Gastrocnemius medialis (tissue), 4 donors: ENCODE measurements at regions of chr16 and their contacts with region 1.

Region 1: GRCh38 chr16:10918294-10919002 is 23.8 kb downstream of the DEXI start:
- DNase-seq: peak; percentile 89 to 96
- ATAC-seq: peak; percentile 39 to 51
- H3K4me3 ChIP-seq: no peak overlapping the region
- H3K27ac ChIP-seq: peak overlapping the region; percentile 92 to 94 (median 93)
- H3K4me1 ChIP-seq: peaks cover 40 to 45% of the 10 kb centered on the region in 2 donors
- H3K27me3 ChIP-seq: no peaks in the 10 kb centered on the region
- CTCF ChIP-seq: peak; percentile 87 to 97 (median 91)
- POLR2A ChIP-seq: no peak

Region 2: DNA sequence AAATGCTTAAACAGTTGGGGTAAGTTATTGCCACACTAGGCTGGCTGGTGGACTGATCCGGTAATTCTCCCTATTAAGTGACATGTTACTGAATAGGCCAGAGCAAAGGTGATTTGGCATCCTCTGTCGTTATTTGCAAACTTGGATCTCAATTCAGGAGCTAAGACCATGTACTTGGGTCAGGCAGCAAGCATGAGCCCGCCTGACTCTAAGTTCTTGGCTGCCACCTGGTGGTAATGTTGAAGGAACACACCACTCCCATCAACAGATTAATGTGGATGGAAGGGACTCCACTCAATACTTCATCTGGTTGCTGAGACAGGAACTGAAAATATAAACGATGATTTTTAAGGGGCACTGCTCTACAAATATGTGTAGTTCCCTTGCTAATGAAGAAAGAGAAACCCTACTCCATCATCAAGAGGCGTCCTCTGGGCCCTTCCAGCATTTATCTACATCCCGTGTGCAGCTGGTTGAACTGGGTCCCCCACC is 408.9 kb before region 1 on chr16:
- in situ Hi-C with region 1: loop called in 2 of 4 experiments (anchors 10 to 25 kb)
- intact Hi-C with region 1: loop called (anchors 2 kb)
- DNase-seq: peak; percentile 30 to 47
- ATAC-seq: peak; percentile 79 to 95
- H3K4me3 ChIP-seq: no peak overlapping the region
- H3K27ac ChIP-seq: no peak overlapping the region
- H3K4me1 ChIP-seq: peaks cover 9 to 11% of the 10 kb centered on the region in 2 donors
- H3K27me3 ChIP-seq: no peaks in the 10 kb centered on the region
- CTCF ChIP-seq: peak; percentile 63 to 81 (median 74)
- POLR2A ChIP-seq: no peak

Region 3: DNA sequence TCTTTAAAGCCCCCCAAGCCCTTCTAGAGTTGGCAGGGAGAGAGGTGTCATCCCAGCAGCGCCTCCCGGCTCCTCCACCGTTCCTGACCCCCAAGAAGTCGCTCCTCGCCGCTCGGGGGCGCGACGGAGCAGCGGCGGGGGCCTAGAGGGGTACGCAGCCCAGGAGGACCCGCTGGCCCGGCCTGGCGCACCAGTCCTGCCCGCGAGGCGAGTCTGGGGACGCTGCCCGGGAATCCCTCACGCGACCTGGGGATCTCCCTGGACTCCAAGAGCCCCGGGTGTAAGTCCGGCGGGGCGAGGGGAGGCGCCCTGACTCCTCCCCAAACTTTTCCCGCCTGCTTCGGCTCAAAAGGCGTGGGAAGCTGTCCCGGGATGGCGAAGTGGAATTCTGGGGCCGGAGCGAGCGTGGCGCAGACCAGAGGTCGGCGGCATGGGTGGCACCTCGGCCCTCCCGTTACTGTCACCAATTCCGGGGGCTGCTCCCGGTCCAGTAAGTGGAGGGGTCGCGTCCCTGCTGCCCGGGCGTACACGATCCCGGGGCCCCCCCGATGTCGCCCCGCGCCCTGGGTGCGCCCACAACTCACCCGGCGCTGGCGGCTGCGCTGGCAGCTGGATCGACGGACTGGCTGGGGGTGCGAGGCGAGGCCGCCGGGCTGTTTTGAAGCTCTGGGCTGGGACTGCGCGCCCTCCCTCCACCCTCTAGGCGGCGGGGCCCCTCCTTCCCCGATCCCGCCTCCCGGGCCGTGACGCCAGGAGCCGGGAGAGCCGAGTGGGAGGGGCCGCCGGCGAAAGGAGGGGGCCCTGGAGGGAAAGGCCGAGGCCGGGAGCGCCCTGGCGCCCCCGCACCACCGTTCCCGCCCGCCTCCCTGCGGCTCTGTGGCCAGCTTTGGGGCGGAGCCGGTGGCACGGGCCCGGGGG is 338.2 kb before region 1 on chr16 and contains the start of gene EMP2:
- in situ Hi-C with region 1: no loop called
- intact Hi-C with region 1: loop called (anchors 2 kb)
- DNase-seq: peak; percentile 23 to 54
- ATAC-seq: peak; percentile 41 to 49
- H3K4me3 ChIP-seq: peak within 1 kb of the TSS; percentile 80 to 96 (median 88)
- H3K27ac ChIP-seq: peak within 1 kb of the TSS; percentile 87 to 93 (median 88)
- H3K4me1 ChIP-seq: peaks cover 39 to 50% of the 10 kb centered on the region in 2 donors
- H3K27me3 ChIP-seq: no peaks in the 10 kb centered on the region
- CTCF ChIP-seq: peak; percentile 33 to 67 (median 59)
- POLR2A ChIP-seq: peak; percentile 74 to 83
- total RNA-seq, gene EMP2: 7.9 to 13.5 (median 11.7) TPM

Region 4: GRCh38 chr16:10743610-10744393 is 174.6 kb before region 1 on chr16 and contains the start of gene NUBP1:
- in situ Hi-C with region 1: loop called (anchors 5 to 10 kb)
- intact Hi-C with region 1: loop called (anchors 2 kb)
- DNase-seq: peak; percentile 98 to 100
- ATAC-seq: peak; percentile 96 to 97
- H3K4me3 ChIP-seq: peak within 1 kb of the TSS; percentile 64 to 76 (median 71)
- H3K27ac ChIP-seq: peak within 1 kb of the TSS; percentile 94 to 98 (median 96)
- H3K4me1 ChIP-seq: peaks cover 23 to 26% of the 10 kb centered on the region in 2 donors
- H3K27me3 ChIP-seq: no peaks in the 10 kb centered on the region
- CTCF ChIP-seq: no peak
- POLR2A ChIP-seq: peak; percentile 76 to 90
- total RNA-seq, gene NUBP1: 19.2 to 38.5 (median 26.9) TPM

Region 5: DNA sequence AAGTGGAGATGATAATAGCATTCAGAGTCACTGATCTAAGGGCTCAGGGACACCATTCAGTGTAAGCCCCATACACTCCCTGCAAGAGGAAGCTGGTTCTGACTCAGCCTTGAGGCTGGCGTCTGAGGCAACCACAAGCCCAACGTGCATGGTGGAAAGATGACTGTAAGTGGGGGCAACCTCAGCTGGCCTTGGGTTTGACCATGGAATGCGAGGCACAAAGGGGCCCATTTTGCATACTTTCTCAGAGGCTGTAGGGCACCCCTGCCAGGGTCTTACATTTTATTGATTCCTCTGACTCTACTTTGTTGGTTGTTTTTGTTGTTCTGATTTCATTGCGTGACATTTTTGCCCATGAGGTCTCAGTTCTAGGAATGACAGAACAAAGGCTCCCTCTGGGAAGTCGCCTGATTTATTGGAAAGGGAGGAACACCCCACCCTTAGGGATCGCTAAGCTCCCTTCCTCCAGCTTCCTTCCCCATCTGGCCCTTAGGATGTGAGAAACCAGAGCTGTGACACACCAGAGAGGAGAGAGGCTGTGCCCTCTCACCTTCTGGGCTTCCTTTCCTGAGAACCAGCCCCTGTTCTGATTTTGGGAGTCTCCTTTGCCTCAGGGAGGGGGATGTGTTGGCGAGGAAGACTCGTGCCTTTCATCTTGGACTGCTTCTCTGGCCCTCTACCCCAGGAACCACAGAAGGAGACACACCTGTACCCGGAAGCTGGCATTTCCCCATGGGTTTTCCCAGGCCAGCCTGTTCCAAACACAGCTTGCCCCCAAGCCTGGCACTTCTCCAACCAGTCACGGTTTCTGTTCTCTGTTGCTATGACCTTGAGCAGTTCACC is 47.1 kb before region 1 on chr16:
- in situ Hi-C with region 1: no loop called
- intact Hi-C with region 1: no loop called
- DNase-seq: no peak
- ATAC-seq: peak in 1 of 2 donors; percentile 48
- H3K4me3 ChIP-seq: no peak overlapping the region
- H3K27ac ChIP-seq: peak overlapping the region; percentile 29 to 58 (median 46)
- H3K4me1 ChIP-seq: peaks cover 5 to 6% of the 10 kb centered on the region in 2 donors
- H3K27me3 ChIP-seq: peaks cover 0 to under 1% (median 0%) of the 10 kb centered on the region in 3 donors
- CTCF ChIP-seq: no peak
- POLR2A ChIP-seq: no peak

Region 6: GRCh38 chr16:10906914-10907756 is 11.3 kb before region 1 on chr16:
- in situ Hi-C with region 1: no loop called
- intact Hi-C with region 1: no loop called
- DNase-seq: no peak
- ATAC-seq: no peak
- H3K4me3 ChIP-seq: no peak overlapping the region
- H3K27ac ChIP-seq: no peak overlapping the region
- H3K4me1 ChIP-seq: no peaks in the 10 kb centered on the region
- H3K27me3 ChIP-seq: no peaks in the 10 kb centered on the region
- CTCF ChIP-seq: no peak
- POLR2A ChIP-seq: no peak

Region 7: GRCh38 chr16:10938361-10938760 is 19.9 kb after region 1 on chr16:
- in situ Hi-C with region 1: no loop called
- intact Hi-C with region 1: loop called (anchors 2 kb)
- DNase-seq: peak in 1 of 2 donors; percentile 73
- ATAC-seq: peak; percentile 40 to 43
- H3K4me3 ChIP-seq: peak overlapping the region; percentile 13 to 73 (median 37)
- H3K27ac ChIP-seq: peak overlapping the region; percentile 91 to 96 (median 94)
- H3K4me1 ChIP-seq: peaks cover 85 to 89% of the 10 kb centered on the region in 2 donors
- H3K27me3 ChIP-seq: no peaks in the 10 kb centered on the region
- CTCF ChIP-seq: no peak
- POLR2A ChIP-seq: peak; percentile 31 to 43